GM12878 (cell line): ENCODE measurements at regions of chr10 and their contacts with region 1.

Region 1: DNA sequence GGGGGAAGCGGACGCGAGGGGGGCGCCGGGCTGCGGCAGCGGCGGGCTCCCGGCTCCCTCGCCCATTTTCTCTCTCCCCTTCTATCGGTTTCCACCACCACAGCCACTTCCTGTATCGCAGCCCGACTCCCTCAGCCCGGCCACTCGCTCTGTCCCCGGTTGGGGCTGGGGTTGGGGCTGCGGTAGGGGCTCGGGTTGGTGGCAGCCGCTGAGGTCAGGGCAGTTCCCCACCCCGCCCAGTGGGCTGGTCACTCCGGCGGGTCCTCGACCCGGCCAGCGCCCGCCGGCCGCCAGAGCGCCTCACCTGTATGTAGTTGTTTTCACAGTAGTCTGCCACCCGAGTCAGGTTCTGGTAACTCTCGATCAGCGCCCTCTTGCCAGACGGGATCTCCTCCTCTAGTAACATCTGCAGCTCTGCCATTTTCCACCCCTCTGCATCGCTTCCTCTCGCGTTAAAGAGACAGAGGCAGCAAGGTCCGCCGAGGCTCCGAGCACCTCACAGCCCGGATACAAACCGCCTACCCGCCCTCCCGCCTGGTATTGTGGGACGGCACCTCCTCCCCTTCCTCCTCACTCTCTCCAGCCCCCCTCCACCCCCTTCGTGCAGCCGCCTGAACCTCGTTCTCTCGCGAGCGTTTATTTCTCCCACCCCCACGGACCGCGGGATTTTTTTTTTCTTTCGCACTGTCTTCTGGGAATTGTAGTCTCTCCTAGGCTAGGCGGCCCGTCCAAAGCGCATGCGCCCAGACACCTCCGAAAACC is at the start of gene ABI1:
- DNase-seq: peak; percentile 98
- ATAC-seq: peak; percentile 86
- H3K4me3 ChIP-seq: peak within 1 kb of the TSS; percentile 91
- H3K27ac ChIP-seq: peak within 1 kb of the TSS; percentile 92
- H3K4me1 ChIP-seq: peaks cover 4% of the 10 kb centered on the region; the same call in 1 of the 2 replicates
- H3K27me3 ChIP-seq: no peaks in the 10 kb centered on the region
- CTCF ChIP-seq: no peak
- EP300 ChIP-seq: peak in 1 of 2 experiments; percentile 3; a peak in 1 of 4 replicates
- POLR2A ChIP-seq: peak; percentile 93
- RAD21 ChIP-seq: no peak
- polyA plus RNA-seq, gene ABI1: 48.7 to 50.3 TPM

Region 2: GRCh38 chr10:26725837-26726727 is 134.5 kb before region 1 on chr10:
- CTCF ChIA-PET with region 1: interaction called, 35 read pairs
- POLR2A ChIA-PET with region 1: interaction called, 4 read pairs
- RAD21 ChIA-PET with region 1: interaction called, 29 read pairs
- SMC1A ChIA-PET with region 1: interaction called, 21 read pairs
- in situ Hi-C with region 1: no loop called
- intact Hi-C with region 1: no loop called
- DNase-seq: no peak
- ATAC-seq: peak; percentile 81
- H3K4me3 ChIP-seq: no peak overlapping the region
- H3K27ac ChIP-seq: no peak overlapping the region
- H3K4me1 ChIP-seq: no peaks in the 10 kb centered on the region
- H3K27me3 ChIP-seq: no peaks in the 10 kb centered on the region
- CTCF ChIP-seq: peak; percentile 70 to 89 (median 76); a peak in 5 of 6 replicates
- EP300 ChIP-seq: no peak
- POLR2A ChIP-seq: no peak
- RAD21 ChIP-seq: peak; percentile 97

Region 3: GRCh38 chr10:26743091-26743490 is 117.5 kb before region 1 on chr10:
- CTCF ChIA-PET with region 1: interaction called, 5 read pairs
- POLR2A ChIA-PET with region 1: interaction called, 10 read pairs
- RAD21 ChIA-PET with region 1: interaction called, 11 read pairs
- SMC1A ChIA-PET with region 1: interaction called, 11 read pairs
- in situ Hi-C with region 1: loop called (anchors 10 kb)
- intact Hi-C with region 1: no loop called
- DNase-seq: no peak
- ATAC-seq: no peak
- H3K4me3 ChIP-seq: no peak overlapping the region
- H3K27ac ChIP-seq: peak overlapping the region; percentile 61
- H3K4me1 ChIP-seq: peaks cover 52% of the 10 kb centered on the region
- H3K27me3 ChIP-seq: no peaks in the 10 kb centered on the region
- CTCF ChIP-seq: no peak
- EP300 ChIP-seq: no peak
- POLR2A ChIP-seq: no peak
- RAD21 ChIP-seq: no peak

Region 4: DNA sequence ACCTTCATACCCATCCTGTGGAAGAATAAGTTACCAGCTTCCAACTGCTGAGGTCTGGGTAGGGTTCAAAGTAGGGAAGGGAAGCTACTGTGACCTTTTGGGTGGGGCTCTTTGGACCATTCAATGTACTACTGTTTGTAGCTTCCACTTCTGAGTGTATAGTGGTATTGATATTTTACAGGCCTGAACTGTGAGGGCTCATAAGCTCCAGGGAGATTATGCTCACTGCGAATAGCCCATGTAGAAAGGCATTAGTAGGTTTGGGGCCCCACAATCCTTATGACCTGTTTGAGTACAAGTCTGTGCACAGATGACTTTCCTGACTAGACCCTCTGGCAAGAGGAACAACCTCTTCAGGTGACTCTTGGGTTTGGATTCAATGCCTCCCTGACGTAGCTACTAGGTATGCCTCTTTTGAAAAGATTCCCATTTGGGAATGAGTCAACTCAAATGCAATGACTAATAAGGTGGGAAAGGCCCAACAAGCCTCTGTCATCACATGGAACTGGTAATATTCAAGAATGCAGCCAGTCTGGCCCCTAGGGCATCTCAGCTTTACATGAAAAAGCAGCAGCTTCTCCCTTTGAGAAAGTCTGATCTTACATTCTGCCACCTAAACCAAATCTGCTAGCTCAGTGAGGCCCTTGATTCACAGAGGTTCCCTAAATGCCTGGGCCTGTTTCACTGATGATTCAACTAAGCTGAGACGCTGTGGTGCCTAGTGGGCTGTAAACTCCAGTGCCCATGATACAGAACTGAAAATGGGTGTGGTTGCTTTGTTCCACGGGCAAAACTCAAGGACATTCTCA is 79.6 kb before region 1 on chr10:
- CTCF ChIA-PET with region 1: interaction called, 13 read pairs
- POLR2A ChIA-PET with region 1: interaction called, 14 read pairs
- RAD21 ChIA-PET with region 1: interaction called, 17 read pairs
- SMC1A ChIA-PET with region 1: interaction called, 12 read pairs
- in situ Hi-C with region 1: no loop called
- intact Hi-C with region 1: no loop called
- DNase-seq: peak; percentile 69
- ATAC-seq: peak; percentile 88
- H3K4me3 ChIP-seq: peak overlapping the region; percentile 13; the same call in 1 of the 2 replicates
- H3K27ac ChIP-seq: peak overlapping the region; percentile 58
- H3K4me1 ChIP-seq: peaks cover 34% of the 10 kb centered on the region
- H3K27me3 ChIP-seq: no peaks in the 10 kb centered on the region
- CTCF ChIP-seq: no peak
- EP300 ChIP-seq: no peak
- POLR2A ChIP-seq: 0 out of 2 replicates have a peak, but pooled peaks have one; percentile 9
- RAD21 ChIP-seq: no peak

Region 5: GRCh38 chr10:26881600-26882331 is 21.1 kb after region 1 on chr10:
- CTCF ChIA-PET with region 1: interaction called, 25 read pairs
- POLR2A ChIA-PET with region 1: no interaction called
- RAD21 ChIA-PET with region 1: interaction called, 13 read pairs
- SMC1A ChIA-PET with region 1: interaction called, 33 read pairs
- in situ Hi-C with region 1: no loop called
- intact Hi-C with region 1: no loop called
- DNase-seq: no peak
- ATAC-seq: peak; percentile 96
- H3K4me3 ChIP-seq: no peak overlapping the region
- H3K27ac ChIP-seq: no peak overlapping the region
- H3K4me1 ChIP-seq: no peaks in the 10 kb centered on the region
- H3K27me3 ChIP-seq: no peaks in the 10 kb centered on the region
- CTCF ChIP-seq: peak; percentile 72 to 80 (median 77)
- EP300 ChIP-seq: no peak
- POLR2A ChIP-seq: no peak
- RAD21 ChIP-seq: peak; percentile 98

Region 6: DNA sequence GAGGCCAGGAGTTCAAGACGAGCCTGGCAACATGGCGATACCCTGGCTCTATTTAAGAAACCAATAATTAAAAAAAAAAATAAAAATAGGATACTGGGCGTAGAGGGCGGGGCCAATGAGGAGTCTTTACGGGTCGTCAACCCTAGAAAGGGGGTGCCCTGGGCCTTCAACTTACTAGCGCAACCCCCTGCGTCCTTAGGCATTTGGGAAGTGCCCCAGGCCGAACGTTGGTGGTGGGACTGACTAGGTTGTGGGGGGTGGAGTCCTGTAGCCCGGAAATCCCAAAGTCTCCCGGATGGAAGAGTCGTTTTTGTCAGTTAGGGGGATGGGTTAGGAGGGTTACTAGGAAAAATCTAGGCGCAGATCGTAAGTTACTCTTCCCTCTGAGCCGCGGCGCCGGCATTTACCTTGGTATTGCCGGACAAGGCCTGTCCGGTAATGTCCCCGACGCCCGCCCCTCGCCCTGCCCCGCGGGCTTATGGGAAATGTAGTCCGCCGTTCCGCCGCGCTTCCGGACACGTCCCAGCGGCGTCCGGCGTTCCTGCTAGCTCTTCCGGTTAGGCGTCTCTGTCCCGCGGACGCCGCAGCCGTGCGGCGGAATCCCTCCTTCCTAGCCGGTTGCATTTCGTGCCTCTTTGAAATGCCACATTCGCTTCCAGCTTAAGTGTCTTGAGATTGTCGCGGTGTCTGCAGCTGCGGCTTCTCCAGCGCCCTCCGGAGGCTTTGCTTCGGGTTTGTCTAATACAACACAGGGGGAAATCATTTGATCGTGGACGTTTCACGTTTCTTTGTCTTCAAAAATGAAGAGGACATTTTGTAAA is 381.2 kb after region 1 on chr10:
- CTCF ChIA-PET with region 1: interaction called, 5 read pairs
- POLR2A ChIA-PET with region 1: interaction called, 3 read pairs
- RAD21 ChIA-PET with region 1: no interaction called
- SMC1A ChIA-PET with region 1: interaction called, 4 read pairs
- in situ Hi-C with region 1: no loop called
- intact Hi-C with region 1: loop called (anchors 2 kb)
- DNase-seq: peak; percentile 80
- ATAC-seq: peak; percentile 74
- H3K4me3 ChIP-seq: peak overlapping the region; percentile 93
- H3K27ac ChIP-seq: peak overlapping the region; percentile 95
- H3K4me1 ChIP-seq: peaks cover 4% of the 10 kb centered on the region; the same call in 1 of the 2 replicates
- H3K27me3 ChIP-seq: no peaks in the 10 kb centered on the region
- CTCF ChIP-seq: peak; percentile 17 to 40 (median 23); a peak in 5 of 6 replicates
- EP300 ChIP-seq: no peak
- POLR2A ChIP-seq: peak; percentile 90
- RAD21 ChIP-seq: no peak